Stomach (tissue), 19 donors: ENCODE measurements at regions of chr15 and their contacts with region 1.

Region 1: GRCh38 chr15:83559310-83559966 is 94.5 kb upstream of the ADAMTSL3 start:
- DNase-seq: peak; percentile 31 to 86
- H3K4me3 ChIP-seq: no peak overlapping the region
- H3K27ac ChIP-seq: no peak overlapping the region
- H3K4me1 ChIP-seq: peaks cover 0 to 3% (median 0%) of the 10 kb centered on the region in 4 donors
- H3K27me3 ChIP-seq: no peaks in the 10 kb centered on the region
- CTCF ChIP-seq: peak in 5 of 7 experiments; percentile 56 to 77 (median 61)
- EP300 ChIP-seq: no peak
- POLR2A ChIP-seq: no peak

Region 2: GRCh38 chr15:83436458-83437158 is 122.8 kb before region 1 on chr15:
- intact Hi-C with region 1: loop called (anchors 5 kb)
- DNase-seq: peak in 1 of 2 donors; percentile 69
- H3K4me3 ChIP-seq: no peak overlapping the region
- H3K27ac ChIP-seq: no peak overlapping the region
- H3K4me1 ChIP-seq: no peaks in the 10 kb centered on the region
- H3K27me3 ChIP-seq: peaks cover 0 to 43% (median 0%) of the 10 kb centered on the region in 3 donors
- CTCF ChIP-seq: no peak
- EP300 ChIP-seq: no peak
- POLR2A ChIP-seq: no peak

Region 3: GRCh38 chr15:83475551-83475950 is 83.9 kb before region 1 on chr15:
- intact Hi-C with region 1: no loop called
- DNase-seq: peak in 1 of 2 donors; percentile 25
- H3K4me3 ChIP-seq: no peak overlapping the region
- H3K27ac ChIP-seq: no peak overlapping the region
- H3K4me1 ChIP-seq: peaks cover 0 to 9% (median 0%) of the 10 kb centered on the region in 4 donors
- H3K27me3 ChIP-seq: no peaks in the 10 kb centered on the region
- CTCF ChIP-seq: no peak
- EP300 ChIP-seq: no peak
- POLR2A ChIP-seq: no peak